ENCODE measurements at regions of chr17 and their contacts with region 1.

Region 1: DNA sequence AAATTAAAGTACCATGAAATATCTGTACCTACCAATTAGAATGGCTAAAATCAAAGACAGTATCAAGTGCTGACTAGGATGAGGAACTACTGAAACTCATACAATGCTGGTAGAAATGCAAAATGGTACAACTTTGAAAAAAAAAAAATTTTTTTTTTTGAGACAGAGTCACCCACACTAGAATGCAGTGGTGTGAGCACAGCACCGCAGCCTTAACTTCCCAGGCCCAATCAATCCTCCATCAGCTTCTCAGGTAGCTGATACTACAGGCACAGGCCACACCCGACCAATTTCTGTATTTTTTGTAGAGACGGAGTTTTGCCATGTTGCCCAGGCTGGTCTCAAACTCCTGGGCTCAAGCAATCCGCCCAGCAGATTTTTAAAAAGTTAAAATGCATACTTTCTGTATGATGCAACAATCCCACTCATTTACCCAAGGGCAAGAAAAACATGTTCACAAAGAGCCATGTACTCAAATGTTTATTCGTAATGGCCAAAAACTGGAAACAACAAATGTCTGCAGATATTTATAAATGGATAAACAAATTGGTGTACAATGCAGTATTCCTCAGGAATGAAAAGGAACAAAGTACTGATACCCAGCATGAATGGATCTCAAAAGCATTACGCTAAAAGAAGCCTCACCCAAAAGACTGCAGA is 8.7 kb downstream of the SMURF2 start:
- DNase-seq: no peak
- ATAC-seq: no peak
- H3K4me3 ChIP-seq: no peak overlapping the region
- H3K27ac ChIP-seq: peak overlapping the region; percentile 21 to 66; a peak in 5 of 6 replicates
- H3K4me1 ChIP-seq: peaks cover 49% of the 10 kb centered on the region
- CTCF ChIP-seq: no peak
- EP300 ChIP-seq: no peak
- POLR2A ChIP-seq: no peak
- RAD21 ChIP-seq: no peak

Region 2: GRCh38 chr17:64538508-64539130 is 114.8 kb before region 1 on chr17:
- CTCF ChIA-PET with region 1: interaction called, 12 read pairs
- POLR2A ChIA-PET with region 1: no interaction called
- DNase-seq: no peak
- ATAC-seq: peak in 1 of 2 experiments; percentile 9; a peak in 2 of 6 replicates
- H3K4me3 ChIP-seq: no peak overlapping the region
- H3K27ac ChIP-seq: no peak overlapping the region
- H3K4me1 ChIP-seq: no peaks in the 10 kb centered on the region
- CTCF ChIP-seq: no peak
- EP300 ChIP-seq: no peak
- POLR2A ChIP-seq: no peak
- RAD21 ChIP-seq: no peak

Region 3: GRCh38 chr17:64547319-64547718 is 106.1 kb before region 1 on chr17:
- CTCF ChIA-PET with region 1: interaction called, 11 read pairs
- POLR2A ChIA-PET with region 1: no interaction called
- DNase-seq: no peak
- ATAC-seq: 0 out of 6 replicates have a peak, but pooled peaks of 1 of the 2 experiments have one; percentile 32
- H3K4me3 ChIP-seq: no peak overlapping the region
- H3K27ac ChIP-seq: no peak overlapping the region
- H3K4me1 ChIP-seq: no peaks in the 10 kb centered on the region
- CTCF ChIP-seq: no peak
- EP300 ChIP-seq: no peak
- POLR2A ChIP-seq: no peak
- RAD21 ChIP-seq: no peak

Region 4: DNA sequence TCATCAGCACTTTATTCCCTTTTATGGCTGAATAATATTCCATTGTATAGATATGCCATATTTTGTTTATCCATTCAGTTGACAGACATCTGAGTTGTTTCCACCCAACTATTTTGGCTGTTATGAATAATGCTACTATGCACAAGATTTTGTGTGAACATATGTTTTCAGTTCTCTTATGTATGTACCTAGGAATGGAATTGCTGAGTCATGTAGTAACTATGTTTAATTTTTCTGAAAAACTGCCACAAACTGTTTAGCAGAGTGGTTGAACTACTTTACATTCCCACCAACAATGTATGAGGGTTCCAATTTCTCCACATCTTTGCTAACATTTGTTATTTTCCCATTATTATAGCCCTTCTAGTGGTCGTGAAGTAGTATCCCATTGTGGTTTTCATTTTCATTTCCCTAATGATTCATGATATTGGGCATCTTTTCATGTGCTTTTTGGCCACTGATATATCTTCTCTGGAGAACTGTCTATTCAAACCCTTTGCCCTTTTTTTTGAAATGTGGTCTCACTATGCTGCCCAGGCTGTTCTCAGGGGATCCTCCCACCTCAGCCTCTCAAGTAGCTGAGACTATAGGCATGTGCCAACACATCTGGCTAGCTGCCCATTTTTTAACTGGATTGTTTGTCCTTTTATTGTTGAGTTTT is 17.7 kb before region 1 on chr17:
- CTCF ChIA-PET with region 1: interaction called, 42 read pairs
- POLR2A ChIA-PET with region 1: no interaction called
- DNase-seq: peak in 1 of 2 experiments; percentile 18
- ATAC-seq: no peak
- H3K4me3 ChIP-seq: no peak overlapping the region
- H3K27ac ChIP-seq: peak overlapping the region; percentile 23 to 60; a peak in 5 of 6 replicates
- H3K4me1 ChIP-seq: peaks cover 25% of the 10 kb centered on the region
- CTCF ChIP-seq: no peak
- EP300 ChIP-seq: no peak
- POLR2A ChIP-seq: no peak
- RAD21 ChIP-seq: no peak

Region 5: DNA sequence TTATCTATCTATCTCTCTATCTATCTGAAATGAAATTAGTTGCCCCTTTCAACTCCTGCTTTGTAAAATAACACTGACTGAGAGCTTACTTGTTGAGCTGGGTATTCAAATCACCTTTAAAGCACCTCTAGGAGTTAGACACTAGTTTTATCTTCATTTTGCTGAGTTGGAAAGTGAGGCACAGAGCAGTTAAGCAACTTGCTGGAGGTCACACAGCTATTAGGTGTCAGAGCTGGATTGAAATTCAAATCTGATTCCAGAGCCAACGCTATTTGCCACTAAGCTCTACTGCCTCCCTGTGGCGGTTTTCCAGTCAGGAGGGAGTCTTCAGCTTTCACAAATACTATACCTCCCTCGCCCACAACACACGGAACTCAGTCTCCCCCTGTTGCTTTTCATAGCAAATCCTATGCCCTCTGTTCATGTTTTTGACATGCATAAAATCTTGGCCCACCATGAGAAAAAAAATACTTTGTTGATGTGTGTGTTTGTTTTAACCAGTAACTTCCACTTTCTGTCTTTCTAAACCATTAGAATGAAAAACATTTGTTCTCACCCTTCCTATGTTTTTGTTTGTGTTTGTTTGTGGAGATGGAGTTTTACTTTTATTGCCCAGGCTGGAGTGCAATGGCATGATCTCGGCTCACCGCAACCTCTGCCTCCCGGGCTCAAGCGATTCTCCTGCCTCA is 83.5 kb after region 1 on chr17:
- CTCF ChIA-PET with region 1: interaction called, 30 read pairs
- POLR2A ChIA-PET with region 1: no interaction called
- DNase-seq: peak in 1 of 2 experiments; percentile 83
- ATAC-seq: peak; percentile 78 to 80
- H3K4me3 ChIP-seq: no peak overlapping the region
- H3K27ac ChIP-seq: no peak overlapping the region
- H3K4me1 ChIP-seq: peaks cover 28% of the 10 kb centered on the region
- CTCF ChIP-seq: peak; percentile 96
- EP300 ChIP-seq: no peak
- POLR2A ChIP-seq: no peak
- RAD21 ChIP-seq: peak; percentile 92 to 96